ENCODE measurements at regions of chr11 and their contacts with region 1.

Region 1: DNA sequence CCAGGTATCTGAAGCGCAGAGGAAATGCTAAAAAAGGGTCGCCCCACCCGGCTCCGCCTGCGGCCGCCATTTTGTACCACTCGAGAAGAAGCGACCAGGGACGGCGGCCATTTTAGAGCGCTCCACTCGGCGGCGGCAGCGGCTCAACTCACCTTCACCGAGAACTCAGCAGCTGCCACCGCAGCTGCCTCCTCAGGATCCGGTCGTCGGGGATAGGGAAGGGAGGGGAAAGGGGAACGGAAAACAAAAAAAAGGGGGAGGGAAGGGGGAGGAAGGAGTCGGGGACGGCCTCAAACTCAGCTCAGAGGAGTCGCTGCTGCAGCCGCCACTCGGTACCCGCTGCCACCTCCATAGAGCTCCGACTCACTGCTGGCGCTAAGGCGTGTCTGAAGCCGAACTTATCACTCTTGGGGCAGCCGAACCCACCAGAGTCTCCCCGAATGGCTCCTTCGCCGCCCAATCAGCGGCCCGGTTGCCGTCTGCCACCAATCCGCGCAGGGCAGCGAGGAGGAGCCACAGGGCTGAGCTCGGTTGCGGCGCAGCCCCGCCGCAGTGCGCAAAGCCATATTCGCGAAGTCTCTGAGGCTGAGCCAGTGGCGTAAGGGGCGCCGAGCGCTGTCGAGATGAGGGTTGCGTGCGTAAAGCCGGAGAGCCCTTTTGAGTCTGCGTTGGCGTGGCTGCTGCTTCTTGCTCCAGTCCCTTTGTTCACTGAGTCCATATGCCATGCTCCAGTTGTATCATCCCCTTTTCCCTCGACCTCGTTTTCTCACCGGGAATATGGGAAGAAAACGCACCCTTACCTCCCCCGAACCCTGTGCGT is at the start of gene EIF4G2:
- DNase-seq: peak; percentile 95
- ATAC-seq: peak; percentile 97
- H3K4me3 ChIP-seq: peak within 1 kb of the TSS; percentile 88 to 99 (median 96)
- H3K27ac ChIP-seq: peak within 1 kb of the TSS; percentile 96
- H3K4me1 ChIP-seq: peaks cover 40% of the 10 kb centered on the region
- H3K27me3 ChIP-seq: no peaks in the 10 kb centered on the region; a peak in 1 of 5 replicates
- CTCF ChIP-seq: peak; percentile 18; the same call in 1 of the 2 replicates
- EP300 ChIP-seq: 0 out of 4 replicates have a peak, but pooled peaks of 1 of the 2 experiments have one; percentile 40
- POLR2A ChIP-seq: peak; percentile 100
- RAD21 ChIP-seq: no peak
- total RNA-seq, gene EIF4G2: 546 and 803 TPM in 2 replicates

Region 2: DNA sequence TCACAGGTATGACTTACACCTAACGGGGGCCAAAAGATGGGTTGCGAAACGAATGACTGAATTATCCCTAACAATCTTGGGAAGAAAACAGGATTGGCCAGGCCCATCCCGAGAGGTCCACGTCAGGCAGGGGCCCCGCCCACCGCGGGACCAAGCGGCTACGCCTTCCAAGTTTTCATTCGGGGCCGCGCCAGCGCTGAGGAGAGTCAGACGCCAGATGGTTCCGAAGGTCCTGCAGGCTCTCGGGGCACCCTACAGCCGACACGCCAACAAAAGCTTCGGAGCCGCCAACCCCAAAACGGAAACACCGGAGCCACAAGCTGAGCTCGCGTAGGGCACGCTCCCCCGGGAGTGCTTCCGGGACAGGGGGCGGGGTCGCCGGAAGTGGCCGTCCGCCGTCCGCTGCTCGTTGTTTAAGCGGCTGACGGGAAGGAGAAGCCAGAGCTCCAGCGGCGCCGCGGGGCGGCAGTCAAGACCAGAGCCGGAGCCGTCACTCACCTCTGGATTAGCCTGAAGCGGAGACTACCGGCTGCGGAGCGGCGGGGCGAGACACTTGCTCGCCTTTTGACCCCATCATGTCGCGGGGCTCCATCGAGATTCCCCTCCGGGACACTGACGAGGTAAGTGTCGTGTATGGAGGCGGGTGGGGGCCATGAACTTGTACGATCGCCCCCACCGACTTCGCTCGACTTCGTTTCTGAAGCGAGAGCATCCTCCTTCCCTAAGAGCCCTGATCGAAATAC is 57.8 kb before region 1 on chr11 and contains the start of gene CTR9:
- CTCF ChIA-PET with region 1: no interaction called
- POLR2A ChIA-PET with region 1: interaction called, 34 read pairs
- in situ Hi-C with region 1: no loop called
- intact Hi-C with region 1: no loop called
- DNase-seq: peak; percentile 87
- ATAC-seq: peak; percentile 97
- H3K4me3 ChIP-seq: peak within 1 kb of the TSS; percentile 75 to 91 (median 87)
- H3K27ac ChIP-seq: peak within 1 kb of the TSS; percentile 86
- H3K4me1 ChIP-seq: peaks cover 10% of the 10 kb centered on the region
- H3K27me3 ChIP-seq: no peaks in the 10 kb centered on the region; a peak in 2 of 5 replicates
- CTCF ChIP-seq: peak; percentile 84
- EP300 ChIP-seq: no peak
- POLR2A ChIP-seq: peak; percentile 91 to 93
- RAD21 ChIP-seq: peak; percentile 61
- total RNA-seq, gene CTR9: 22.1 and 35.9 TPM in 2 replicates

Region 3: GRCh38 chr11:10778217-10778970 is 30.4 kb before region 1 on chr11:
- CTCF ChIA-PET with region 1: no interaction called
- POLR2A ChIA-PET with region 1: interaction called, 13 read pairs
- in situ Hi-C with region 1: no loop called
- intact Hi-C with region 1: no loop called
- DNase-seq: no peak
- ATAC-seq: no peak
- H3K4me3 ChIP-seq: no peak overlapping the region
- H3K27ac ChIP-seq: no peak overlapping the region
- H3K4me1 ChIP-seq: peaks cover 17% of the 10 kb centered on the region
- H3K27me3 ChIP-seq: no peaks in the 10 kb centered on the region
- CTCF ChIP-seq: no peak
- EP300 ChIP-seq: no peak
- POLR2A ChIP-seq: no peak
- RAD21 ChIP-seq: no peak

Region 4: GRCh38 chr11:10847960-10848870 is 39.5 kb after region 1 on chr11:
- CTCF ChIA-PET with region 1: no interaction called
- POLR2A ChIA-PET with region 1: interaction called, 25 read pairs
- in situ Hi-C with region 1: no loop called
- intact Hi-C with region 1: no loop called
- DNase-seq: no peak
- ATAC-seq: no peak
- H3K4me3 ChIP-seq: no peak overlapping the region
- H3K27ac ChIP-seq: no peak overlapping the region
- H3K4me1 ChIP-seq: no peaks in the 10 kb centered on the region
- H3K27me3 ChIP-seq: no peaks in the 10 kb centered on the region
- CTCF ChIP-seq: no peak
- EP300 ChIP-seq: no peak
- POLR2A ChIP-seq: no peak
- RAD21 ChIP-seq: no peak

Region 5: DNA sequence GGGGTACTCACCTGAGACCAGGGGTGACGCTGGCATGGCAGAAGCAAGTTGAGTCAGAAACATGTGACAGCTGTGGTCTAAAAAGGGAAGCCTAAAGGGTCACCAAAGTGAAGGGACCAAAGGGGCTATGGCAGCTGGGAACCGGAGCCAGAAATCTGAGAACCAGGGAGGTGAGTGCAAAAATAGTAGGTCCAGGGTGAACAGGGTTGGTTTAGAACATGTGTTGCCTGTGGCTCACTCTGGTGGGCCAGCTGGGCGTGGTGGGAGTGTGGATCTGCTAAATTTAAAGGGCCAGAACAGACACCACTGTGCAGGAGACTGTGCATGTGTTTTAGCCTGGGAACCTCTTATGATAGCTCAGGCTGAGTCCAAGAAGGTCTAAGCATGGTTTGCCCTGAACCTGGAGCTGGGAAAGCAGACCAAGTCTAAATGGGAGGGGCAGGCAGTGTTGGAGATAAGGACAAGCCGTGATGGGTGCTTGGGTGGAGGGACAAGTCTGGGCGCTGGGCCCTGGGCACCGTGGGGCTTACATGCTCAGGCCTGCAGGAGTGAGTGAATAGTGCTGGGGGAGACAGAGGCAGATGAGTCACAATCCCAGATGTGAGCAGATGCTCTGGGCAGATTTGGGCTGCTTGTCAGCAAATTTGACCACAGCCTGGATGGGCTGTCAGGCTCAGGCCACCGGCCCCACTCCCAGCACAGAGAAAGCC is 90.5 kb after region 1 on chr11:
- CTCF ChIA-PET with region 1: no interaction called
- POLR2A ChIA-PET with region 1: interaction called, 29 read pairs
- in situ Hi-C with region 1: no loop called
- intact Hi-C with region 1: no loop called
- DNase-seq: no peak
- ATAC-seq: peak; percentile 63
- H3K4me3 ChIP-seq: peak overlapping the region in 1 of 3 experiments; percentile 45; a peak in 2 of 6 replicates
- H3K27ac ChIP-seq: peak overlapping the region; percentile 11
- H3K4me1 ChIP-seq: peaks cover 23% of the 10 kb centered on the region
- H3K27me3 ChIP-seq: no peaks in the 10 kb centered on the region
- CTCF ChIP-seq: no peak
- EP300 ChIP-seq: no peak
- POLR2A ChIP-seq: no peak
- RAD21 ChIP-seq: no peak

Measured in HepG2 (cell line).